SK-N-SH (cell line): ENCODE measurements at regions of chr11 and their contacts with region 1.

Region 1: DNA sequence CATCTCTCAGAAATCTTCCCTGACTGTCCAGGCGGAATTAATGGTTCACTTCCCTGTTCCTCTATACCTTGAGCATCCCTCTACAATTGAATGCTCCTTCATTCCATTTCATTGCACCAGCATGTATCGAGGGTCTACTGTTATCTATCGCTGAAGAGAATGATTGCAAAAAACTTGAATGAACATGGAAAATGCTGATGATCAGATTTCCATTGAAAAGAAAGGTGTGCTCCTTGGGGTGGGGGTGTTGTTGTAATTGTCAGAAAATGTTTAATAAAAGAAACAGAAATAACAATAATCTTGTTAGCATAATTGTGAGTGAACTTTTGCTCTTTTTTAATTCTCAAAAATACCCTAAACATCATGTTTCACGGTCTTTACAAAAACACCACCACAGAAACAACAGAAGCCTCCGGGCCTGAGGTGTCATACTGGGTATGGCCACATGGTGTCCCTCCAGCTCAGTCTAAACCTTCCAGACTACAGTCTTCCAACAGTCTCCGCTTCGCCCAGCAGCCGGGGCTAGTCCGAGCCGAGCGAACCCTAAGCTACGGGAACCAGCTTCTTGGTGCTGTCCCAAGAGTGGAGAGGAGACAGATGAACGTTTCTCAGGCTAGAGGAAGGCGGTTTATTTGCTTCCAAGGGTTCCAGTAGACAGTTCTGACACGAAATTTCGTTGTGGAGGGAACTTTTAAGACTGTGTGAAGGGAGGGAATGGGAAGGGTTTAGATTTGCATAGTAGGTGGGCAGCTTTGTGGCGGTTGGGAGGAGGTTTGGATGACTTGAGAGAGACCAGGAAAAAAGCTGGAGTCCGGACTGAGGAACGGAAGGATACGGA is 75.8 kb upstream of the ZBED5 start:
- DNase-seq: peak; percentile 78
- H3K4me3 ChIP-seq: peak overlapping the region; percentile 44 to 54
- H3K27ac ChIP-seq: peak overlapping the region; percentile 30 to 69; a peak in 1 of 4 replicates
- H3K4me1 ChIP-seq: peaks cover 0 to 9% of the 10 kb centered on the region in 2 experiments; a peak in 1 of 4 replicates
- H3K27me3 ChIP-seq: no peaks in the 10 kb centered on the region
- CTCF ChIP-seq: peak; percentile 94
- EP300 ChIP-seq: no peak
- RAD21 ChIP-seq: peak; percentile 99

Region 2: DNA sequence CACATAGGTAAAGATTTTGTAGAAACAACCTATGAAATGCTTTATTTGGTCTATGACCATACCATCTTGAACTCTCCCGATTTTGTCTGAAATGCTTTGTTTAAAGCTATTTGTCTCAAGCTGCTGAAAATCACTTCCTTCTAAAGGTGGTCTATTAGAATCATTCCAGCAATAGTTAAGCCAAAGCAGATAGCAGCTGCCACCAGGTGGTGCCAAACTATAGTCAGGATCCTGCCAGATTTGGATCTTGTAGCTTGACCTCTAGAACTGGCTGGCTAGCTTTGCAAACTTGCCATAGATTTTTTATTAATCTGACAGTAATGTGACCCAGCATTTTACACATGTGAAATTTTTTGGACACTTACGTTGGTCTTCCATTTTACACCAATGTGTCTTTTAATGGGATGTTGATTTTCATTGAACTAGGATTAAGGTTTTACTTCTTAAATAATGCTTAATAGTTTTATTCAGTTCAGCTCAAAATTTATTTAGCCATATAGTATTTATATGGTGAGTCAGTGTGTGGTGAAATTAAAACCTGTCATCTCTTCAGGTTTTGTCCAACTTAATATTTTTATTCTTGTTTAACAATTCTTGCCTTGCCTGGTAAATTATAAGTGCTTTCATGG is 162.9 kb before region 1 on chr11:
- CTCF ChIA-PET with region 1: interaction called, 11 read pairs
- POLR2A ChIA-PET with region 1: no interaction called
- DNase-seq: peak; percentile 49
- H3K4me3 ChIP-seq: no peak overlapping the region
- H3K27ac ChIP-seq: peak overlapping the region in 1 of 2 experiments; percentile 28; a peak in 2 of 4 replicates
- H3K4me1 ChIP-seq: peaks cover 0 to 8% of the 10 kb centered on the region in 2 experiments; a peak in 2 of 4 replicates
- H3K27me3 ChIP-seq: no peaks in the 10 kb centered on the region
- CTCF ChIP-seq: peak; percentile 87
- EP300 ChIP-seq: no peak
- RAD21 ChIP-seq: peak; percentile 74

Region 3: GRCh38 chr11:10878408-10879214 is 55.1 kb before region 1 on chr11:
- CTCF ChIA-PET with region 1: interaction called, 10 read pairs
- POLR2A ChIA-PET with region 1: no interaction called
- DNase-seq: peak; percentile 47
- H3K4me3 ChIP-seq: no peak overlapping the region
- H3K27ac ChIP-seq: no peak overlapping the region; a peak in 1 of 4 replicates
- H3K4me1 ChIP-seq: no peaks in the 10 kb centered on the region
- H3K27me3 ChIP-seq: no peaks in the 10 kb centered on the region
- CTCF ChIP-seq: peak; percentile 72
- EP300 ChIP-seq: no peak
- RAD21 ChIP-seq: peak; percentile 47

Region 4: GRCh38 chr11:11010624-11011127 is 77.0 kb after region 1 on chr11:
- CTCF ChIA-PET with region 1: interaction called, 17 read pairs
- POLR2A ChIA-PET with region 1: no interaction called
- DNase-seq: peak; percentile 45
- H3K4me3 ChIP-seq: no peak overlapping the region
- H3K27ac ChIP-seq: no peak overlapping the region
- H3K4me1 ChIP-seq: peaks cover 0 to 10% of the 10 kb centered on the region in 2 experiments; a peak in 2 of 4 replicates
- H3K27me3 ChIP-seq: no peaks in the 10 kb centered on the region
- CTCF ChIP-seq: peak; percentile 32; the same call in 1 of the 2 replicates
- EP300 ChIP-seq: no peak
- RAD21 ChIP-seq: peak; percentile 32; the same call in 1 of the 2 replicates

Region 5: DNA sequence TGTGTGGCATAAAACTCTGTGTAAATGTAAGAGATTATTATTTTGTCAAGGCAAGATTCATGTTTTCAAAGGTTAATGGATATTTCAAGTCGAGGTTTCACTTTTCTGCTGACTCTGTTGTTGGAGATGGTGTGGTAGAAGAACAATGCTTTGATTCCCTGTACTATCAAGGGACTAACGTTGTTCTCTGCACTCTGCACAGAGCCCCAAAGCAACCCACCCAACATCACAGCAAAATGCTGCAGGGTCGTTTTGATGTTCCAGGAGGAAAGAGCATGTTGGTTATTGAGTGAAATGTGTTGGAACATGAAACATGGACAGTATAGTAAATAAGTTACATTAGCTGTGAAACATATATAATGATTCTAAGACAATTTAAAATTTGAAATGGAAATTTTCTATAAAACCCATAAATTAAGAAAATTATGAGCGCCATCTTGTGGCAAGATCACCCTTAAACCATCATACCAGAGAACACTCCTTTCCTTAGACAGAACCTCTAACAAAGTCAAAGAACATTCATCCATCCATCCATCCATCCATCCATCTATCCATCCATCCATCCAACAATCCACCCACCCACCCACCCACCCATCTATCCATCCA is 88.6 kb after region 1 on chr11:
- CTCF ChIA-PET with region 1: interaction called, 120 read pairs
- POLR2A ChIA-PET with region 1: interaction called, 5 read pairs
- DNase-seq: peak; percentile 32
- H3K4me3 ChIP-seq: no peak overlapping the region
- H3K27ac ChIP-seq: no peak overlapping the region
- H3K4me1 ChIP-seq: peaks cover 0 to 6% of the 10 kb centered on the region in 2 experiments; a peak in 1 of 4 replicates
- H3K27me3 ChIP-seq: no peaks in the 10 kb centered on the region
- CTCF ChIP-seq: peak; percentile 66
- EP300 ChIP-seq: no peak
- RAD21 ChIP-seq: peak; percentile 67

Region 6: GRCh38 chr11:11135820-11136465 is 202.3 kb after region 1 on chr11:
- CTCF ChIA-PET with region 1: no interaction called
- POLR2A ChIA-PET with region 1: no interaction called
- DNase-seq: no peak
- H3K4me3 ChIP-seq: no peak overlapping the region
- H3K27ac ChIP-seq: no peak overlapping the region
- H3K4me1 ChIP-seq: no peaks in the 10 kb centered on the region
- H3K27me3 ChIP-seq: no peaks in the 10 kb centered on the region
- CTCF ChIP-seq: no peak
- EP300 ChIP-seq: no peak
- RAD21 ChIP-seq: no peak

Region 7: DNA sequence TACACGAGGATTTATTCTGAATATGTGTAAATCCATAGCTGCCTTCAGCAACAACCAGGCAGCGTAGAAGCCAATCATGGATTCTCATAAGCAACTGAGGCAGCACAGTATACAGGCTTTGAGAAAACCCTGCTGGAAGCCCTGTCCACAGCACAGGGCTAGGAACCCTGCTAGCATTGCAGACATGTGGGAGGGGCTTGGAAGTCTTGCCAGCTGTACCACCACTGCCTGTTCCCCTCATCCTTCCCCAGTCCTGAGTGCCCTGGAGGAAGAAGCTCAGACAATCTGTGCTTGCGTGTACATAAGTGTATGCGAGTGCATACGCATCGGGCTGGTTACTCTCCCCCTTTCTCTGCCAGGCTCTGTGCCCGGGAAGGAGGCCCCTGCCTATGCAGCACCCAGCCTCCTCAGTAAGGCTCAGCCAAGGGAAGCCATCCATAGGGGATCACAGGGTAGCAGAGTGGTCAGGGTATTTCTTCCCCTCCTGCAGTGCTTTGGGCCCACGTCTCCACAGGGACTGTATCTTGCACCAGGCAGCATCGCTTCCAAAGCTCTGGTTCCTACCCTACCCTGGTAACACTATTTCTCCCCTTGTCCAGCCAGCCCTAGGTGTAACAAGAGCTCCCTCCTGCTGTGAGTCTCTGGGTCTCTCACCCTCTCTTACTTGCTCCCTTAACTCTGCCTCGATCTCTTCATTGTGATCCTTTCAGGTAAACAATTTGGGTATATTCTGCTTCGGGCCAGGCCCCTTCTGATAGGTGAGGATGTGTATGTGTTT is 597.6 kb after region 1 on chr11:
- CTCF ChIA-PET with region 1: interaction called, 10 read pairs
- POLR2A ChIA-PET with region 1: no interaction called
- DNase-seq: peak; percentile 32
- H3K4me3 ChIP-seq: no peak overlapping the region
- H3K27ac ChIP-seq: peak overlapping the region in 1 of 2 experiments; percentile 34; a peak in 1 of 4 replicates
- H3K4me1 ChIP-seq: peaks cover 0 to 57% of the 10 kb centered on the region in 2 experiments; a peak in 2 of 4 replicates
- H3K27me3 ChIP-seq: no peaks in the 10 kb centered on the region
- CTCF ChIP-seq: no peak
- EP300 ChIP-seq: no peak
- RAD21 ChIP-seq: peak; percentile 39